ENCODE measurements at regions of chr9 and their contacts with region 1.

Region 1: DNA sequence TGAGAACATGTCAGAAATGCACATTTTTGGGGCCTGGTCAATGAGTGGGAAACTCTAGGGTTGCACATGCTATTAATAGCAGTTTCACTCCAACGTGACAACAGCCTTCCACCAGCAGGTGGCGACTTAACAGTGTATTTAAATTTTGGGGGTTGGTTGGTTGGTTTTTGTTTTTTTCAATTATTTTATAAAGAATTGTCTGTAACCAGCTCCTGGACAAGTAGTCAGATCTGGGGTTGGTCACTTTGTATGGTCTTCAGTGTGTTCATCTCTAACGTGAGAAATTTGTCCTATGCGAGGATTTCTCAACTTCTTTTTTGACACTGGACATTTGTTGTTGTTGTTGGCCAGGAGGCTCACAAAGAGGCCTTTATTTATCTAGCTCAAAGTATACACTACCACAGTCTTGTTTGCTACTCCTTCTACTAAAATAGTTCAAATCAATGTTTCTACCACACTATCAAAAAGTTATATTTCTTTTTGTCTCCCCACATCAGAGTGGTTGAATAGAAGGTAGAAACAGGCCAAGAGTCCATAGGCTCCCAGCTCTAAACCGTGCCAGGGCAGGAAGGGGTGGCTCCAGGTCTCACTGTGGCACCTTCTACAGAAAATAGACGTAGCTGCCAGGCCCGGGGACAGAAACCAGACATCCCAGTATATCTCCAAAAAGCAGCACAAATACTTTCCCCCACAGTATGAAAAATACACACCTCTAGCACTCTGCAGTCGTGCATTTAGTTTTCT is 110.4 kb downstream of the TRPM6 start:
- DNase-seq: peak; percentile 83
- H3K4me3 ChIP-seq: no peak overlapping the region
- H3K27ac ChIP-seq: no peak overlapping the region
- H3K4me1 ChIP-seq: peaks cover 0 to 8% (median 0%) of the 10 kb centered on the region in 6 donors
- H3K27me3 ChIP-seq: no peaks in the 10 kb centered on the region
- CTCF ChIP-seq: peak; percentile 66 to 86 (median 79)
- POLR2A ChIP-seq: no peak

Region 2: DNA sequence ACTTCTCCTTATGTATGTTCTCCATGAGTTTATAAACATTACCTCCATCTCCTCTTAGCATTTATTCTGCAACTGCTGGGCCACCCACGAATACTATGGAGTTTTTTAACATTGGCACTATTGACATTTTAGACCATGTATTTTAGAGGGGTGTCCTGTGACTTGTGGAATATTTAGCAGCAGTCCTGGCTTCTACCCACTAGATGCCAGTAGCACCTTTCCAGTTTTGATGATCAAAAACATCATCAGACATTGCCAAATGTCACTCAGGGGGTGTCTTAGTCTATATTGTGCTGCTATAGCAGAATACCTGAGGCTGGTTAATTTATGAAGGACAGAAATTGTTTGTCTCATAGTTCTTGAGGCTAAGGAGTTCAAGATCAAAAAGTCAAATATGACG is 467.7 kb before region 1 on chr9:
- intact Hi-C with region 1: no loop called
- DNase-seq: no peak
- H3K4me3 ChIP-seq: no peak overlapping the region
- H3K27ac ChIP-seq: no peak overlapping the region
- H3K4me1 ChIP-seq: no peaks in the 10 kb centered on the region
- H3K27me3 ChIP-seq: no peaks in the 10 kb centered on the region
- CTCF ChIP-seq: no peak
- POLR2A ChIP-seq: no peak

Region 3: GRCh38 chr9:75001719-75002422 is 224.6 kb after region 1 on chr9:
- intact Hi-C with region 1: loop called (anchors 2 kb)
- DNase-seq: no peak
- H3K4me3 ChIP-seq: no peak overlapping the region
- H3K27ac ChIP-seq: no peak overlapping the region
- H3K4me1 ChIP-seq: peaks cover 0 to 12% (median 1%) of the 10 kb centered on the region in 6 donors
- H3K27me3 ChIP-seq: no peaks in the 10 kb centered on the region
- CTCF ChIP-seq: peak; percentile 40 to 78 (median 71)
- POLR2A ChIP-seq: no peak

Region 4: GRCh38 chr9:75071530-75072124 is 294.3 kb after region 1 on chr9:
- intact Hi-C with region 1: loop called (anchors 5 kb)
- DNase-seq: no peak
- H3K4me3 ChIP-seq: no peak overlapping the region
- H3K27ac ChIP-seq: no peak overlapping the region
- H3K4me1 ChIP-seq: peaks cover 0 to 4% (median 0%) of the 10 kb centered on the region in 6 donors
- H3K27me3 ChIP-seq: no peaks in the 10 kb centered on the region
- CTCF ChIP-seq: no peak
- POLR2A ChIP-seq: no peak